Caco-2 (cell line): ENCODE measurements at regions of chr2 and their contacts with region 1.

Region 1: DNA sequence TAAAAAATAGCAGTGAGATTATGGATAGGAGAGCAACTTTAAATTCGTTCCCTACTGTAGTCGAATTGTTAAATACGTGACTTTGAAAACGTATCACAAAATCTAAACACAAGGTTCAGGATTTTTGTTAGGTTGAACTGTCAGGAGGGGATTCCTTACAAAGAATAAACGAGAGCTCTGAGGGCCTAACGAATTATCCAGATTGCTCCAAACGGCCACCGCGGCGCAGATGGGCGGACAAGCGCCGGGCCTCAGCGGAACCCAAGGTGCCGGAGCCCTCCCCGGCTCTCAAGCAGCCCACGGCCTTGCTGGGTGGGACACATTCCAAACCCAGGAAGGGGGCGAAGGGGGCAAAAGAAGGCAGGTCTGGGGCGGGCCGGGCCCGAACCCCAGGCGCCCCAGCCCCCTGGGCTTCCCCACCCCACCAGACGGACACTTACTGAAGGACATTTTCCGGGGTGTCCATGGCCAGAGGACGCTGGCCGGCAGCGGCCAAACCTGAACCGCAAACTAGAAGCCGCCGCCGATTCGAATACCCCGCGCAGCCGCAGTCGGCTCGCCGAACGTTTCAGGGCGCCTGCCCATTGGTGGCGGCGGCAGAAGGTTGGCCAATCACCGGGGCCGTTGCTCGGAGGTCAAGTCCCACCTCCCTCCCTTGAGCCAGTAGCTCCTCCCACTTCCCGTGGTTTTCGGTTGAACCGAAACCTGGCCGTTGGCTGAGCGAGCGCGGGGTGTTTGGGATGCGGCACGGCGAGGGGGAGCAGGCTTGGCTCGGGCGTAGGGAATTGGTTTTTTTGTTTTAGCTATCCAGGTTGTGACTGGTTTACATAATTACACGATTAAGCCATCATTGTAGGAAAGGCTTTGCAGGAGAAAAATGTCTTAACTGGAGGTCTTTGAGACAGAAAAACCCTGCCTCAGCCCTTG is at the start of gene BUB1:
- DNase-seq: peak; percentile 98 to 99
- H3K4me3 ChIP-seq: peak within 1 kb of the TSS; percentile 70
- H3K4me3 Mint-ChIP-seq: peak within 1 kb of the TSS; percentile 100
- H3K27ac Mint-ChIP-seq: peak within 1 kb of the TSS; percentile 99
- H3K4me1 ChIP-seq: no peaks in the 10 kb centered on the region
- H3K4me1 Mint-ChIP-seq: peaks cover 15% of the 10 kb centered on the region
- H3K27me3 ChIP-seq: no peaks in the 10 kb centered on the region
- H3K27me3 Mint-ChIP-seq: no peaks in the 10 kb centered on the region
- CTCF ChIP-seq: no peak
- total RNA-seq, gene BUB1: 59.1 and 60.7 TPM in 2 replicates

Region 2: GRCh38 chr2:110732422-110733413 is 54.9 kb after region 1 on chr2 and contains the start of gene ACOXL:
- CTCF ChIA-PET with region 1: no interaction called
- POLR2A ChIA-PET with region 1: interaction called, 4 read pairs
- intact Hi-C with region 1: loop called (anchors 5 kb)
- DNase-seq: peak; percentile 77 to 82
- H3K4me3 ChIP-seq: peak within 1 kb of the TSS; percentile 47
- H3K4me3 Mint-ChIP-seq: peak within 1 kb of the TSS; percentile 80
- H3K27ac Mint-ChIP-seq: no peak within 1 kb of the TSS
- H3K4me1 ChIP-seq: peaks cover 29% of the 10 kb centered on the region
- H3K4me1 Mint-ChIP-seq: peaks cover 17% of the 10 kb centered on the region
- H3K27me3 ChIP-seq: no peaks in the 10 kb centered on the region; the same call in 1 of the 2 replicates
- H3K27me3 Mint-ChIP-seq: peaks cover 3% of the 10 kb centered on the region
- CTCF ChIP-seq: no peak
- total RNA-seq, gene ACOXL: 2.6 and 2.9 TPM in 2 replicates

Region 3: GRCh38 chr2:110755491-110756078 is 77.8 kb after region 1 on chr2:
- CTCF ChIA-PET with region 1: interaction called, 10 read pairs
- POLR2A ChIA-PET with region 1: interaction called, 9 read pairs
- intact Hi-C with region 1: loop called (anchors 1 kb)
- DNase-seq: no peak
- H3K4me3 ChIP-seq: no peak overlapping the region
- H3K4me3 Mint-ChIP-seq: no peak overlapping the region
- H3K27ac Mint-ChIP-seq: no peak overlapping the region
- H3K4me1 ChIP-seq: no peaks in the 10 kb centered on the region
- H3K4me1 Mint-ChIP-seq: no peaks in the 10 kb centered on the region
- H3K27me3 ChIP-seq: no peaks in the 10 kb centered on the region
- H3K27me3 Mint-ChIP-seq: peaks cover 4% of the 10 kb centered on the region
- CTCF ChIP-seq: peak; percentile 41 to 56

Region 4: DNA sequence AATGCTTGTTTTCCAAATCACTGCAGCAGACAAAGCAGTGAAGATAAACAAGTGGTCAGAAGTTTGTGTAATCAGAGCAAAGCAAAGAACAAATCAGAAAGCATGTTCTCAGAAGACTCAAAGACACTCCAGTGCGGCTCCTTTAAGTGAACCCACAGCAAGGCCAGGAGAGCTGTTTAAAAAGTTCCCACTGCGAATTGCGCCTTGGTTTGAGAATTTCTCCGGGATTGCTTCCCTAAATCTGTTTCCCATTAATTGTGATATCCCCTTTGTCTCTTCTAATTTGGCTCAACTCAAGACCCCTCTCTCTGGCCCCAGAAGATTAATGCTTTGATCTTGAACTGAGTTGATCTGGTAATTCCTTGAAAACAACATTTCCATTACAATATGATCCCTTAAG is 320.5 kb after region 1 on chr2:
- CTCF ChIA-PET with region 1: no interaction called
- POLR2A ChIA-PET with region 1: no interaction called
- intact Hi-C with region 1: no loop called
- DNase-seq: no peak
- H3K4me3 ChIP-seq: no peak overlapping the region
- H3K4me3 Mint-ChIP-seq: no peak overlapping the region
- H3K27ac Mint-ChIP-seq: no peak overlapping the region
- H3K4me1 ChIP-seq: no peaks in the 10 kb centered on the region
- H3K4me1 Mint-ChIP-seq: no peaks in the 10 kb centered on the region
- H3K27me3 ChIP-seq: no peaks in the 10 kb centered on the region
- H3K27me3 Mint-ChIP-seq: peaks cover 7% of the 10 kb centered on the region
- CTCF ChIP-seq: no peak